ENCODE measurements at regions of chr3 and their contacts with region 1.

Region 1: DNA sequence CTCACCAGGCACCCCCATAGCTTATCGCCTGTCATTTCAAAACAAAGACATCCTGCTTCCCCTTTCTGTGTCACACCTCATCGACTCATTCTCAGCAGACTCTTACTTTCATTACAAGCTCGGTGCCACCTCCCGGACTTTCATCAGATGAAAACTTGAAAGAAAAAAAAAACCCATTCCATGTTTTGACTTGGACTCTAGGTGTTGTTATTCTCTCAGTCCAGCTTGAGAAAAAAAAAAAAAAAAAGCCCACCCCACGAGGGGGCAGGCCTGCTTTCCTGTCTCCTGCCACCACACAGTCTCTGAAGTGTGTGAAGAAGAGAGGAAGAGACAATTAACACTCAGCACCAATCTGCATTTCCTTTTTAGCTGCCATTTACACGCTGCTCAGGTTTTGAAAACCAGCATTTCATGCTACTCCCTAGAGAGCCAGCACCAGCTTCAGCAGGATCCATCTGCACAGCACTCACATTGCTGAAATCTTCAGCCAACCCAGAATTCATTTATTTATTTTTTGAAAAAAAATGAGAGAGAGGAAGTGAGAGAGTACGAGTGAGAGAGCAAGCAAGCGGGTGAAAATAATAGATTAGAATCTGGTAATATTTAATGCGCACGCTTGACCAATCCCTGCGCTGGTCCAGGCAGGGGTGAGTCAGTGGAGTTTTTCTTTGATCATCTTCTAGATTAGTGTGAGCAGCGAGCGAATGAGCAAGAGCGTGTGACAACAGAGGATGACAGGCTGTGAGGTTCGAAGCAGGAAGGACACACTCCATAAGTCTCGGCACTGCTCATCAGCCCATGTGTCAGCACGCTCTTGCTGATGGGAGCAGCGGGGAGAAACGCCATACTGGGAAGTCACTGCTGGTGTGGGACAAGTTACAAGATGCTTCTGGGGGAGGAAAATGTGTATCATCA is 23.5 kb downstream of the ZNF80 start:
- DNase-seq: peak; percentile 86
- ATAC-seq: peak; percentile 76
- H3K4me3 Mint-ChIP-seq: no peak overlapping the region
- H3K27ac Mint-ChIP-seq: no peak overlapping the region
- H3K4me1 Mint-ChIP-seq: peaks cover 17% of the 10 kb centered on the region
- H3K27me3 Mint-ChIP-seq: no peaks in the 10 kb centered on the region

Region 2: DNA sequence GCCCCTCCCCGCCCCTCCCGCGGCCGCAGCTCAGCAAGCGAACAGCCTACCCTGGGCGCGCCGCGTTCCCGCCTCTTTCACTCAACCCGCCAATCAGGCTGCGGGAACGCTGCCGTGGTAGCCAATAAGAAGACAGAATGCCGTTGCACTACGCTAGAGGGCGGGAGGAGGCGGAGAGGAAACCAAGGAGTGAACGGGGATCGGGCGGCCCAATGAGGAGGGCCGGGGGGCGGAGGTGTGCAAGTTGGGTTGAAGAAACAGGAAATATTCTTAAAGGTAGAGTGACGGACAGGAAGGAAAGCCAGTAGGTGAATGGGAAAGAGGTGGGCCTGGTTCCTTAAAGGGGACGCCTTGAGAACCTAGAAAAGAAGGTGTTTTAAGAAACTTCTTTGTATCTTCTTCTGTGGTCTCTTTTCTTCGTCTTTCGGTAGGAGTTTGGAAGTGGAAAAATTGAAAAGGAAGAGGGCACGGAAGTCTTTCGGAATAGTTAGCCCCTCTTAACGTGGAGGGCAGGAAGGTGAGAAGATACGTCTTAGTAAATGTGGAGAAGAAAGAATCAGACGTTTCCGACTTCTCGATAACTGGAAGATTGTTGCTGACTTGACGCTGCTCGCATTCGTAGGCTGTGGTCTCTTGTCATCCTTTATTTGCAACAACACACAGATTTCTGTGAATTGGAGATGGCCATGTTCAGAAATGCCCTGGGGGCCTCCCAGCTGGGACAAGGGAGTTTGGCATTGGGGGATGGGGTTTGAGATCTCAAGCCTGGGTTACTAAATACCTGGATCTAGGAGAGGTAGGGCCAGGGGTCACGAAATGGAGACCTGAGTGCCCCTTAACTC is 517.0 kb before region 1 on chr3:
- CTCF ChIA-PET with region 1: no interaction called
- POLR2A ChIA-PET with region 1: no interaction called
- intact Hi-C with region 1: loop called in 1 of 2 experiments (anchors 2 kb)
- DNase-seq: peak; percentile 99
- ATAC-seq: peak; percentile 92
- H3K4me3 Mint-ChIP-seq: no peak overlapping the region
- H3K27ac Mint-ChIP-seq: no peak overlapping the region
- H3K4me1 Mint-ChIP-seq: peaks cover 27% of the 10 kb centered on the region
- H3K27me3 Mint-ChIP-seq: no peaks in the 10 kb centered on the region

Region 3: GRCh38 chr3:113825090-113825489 is 388.8 kb before region 1 on chr3:
- CTCF ChIA-PET with region 1: no interaction called
- POLR2A ChIA-PET with region 1: no interaction called
- intact Hi-C with region 1: no loop called
- DNase-seq: no peak
- ATAC-seq: peak; percentile 47
- H3K4me3 Mint-ChIP-seq: no peak overlapping the region
- H3K27ac Mint-ChIP-seq: no peak overlapping the region
- H3K4me1 Mint-ChIP-seq: peaks cover 6% of the 10 kb centered on the region
- H3K27me3 Mint-ChIP-seq: no peaks in the 10 kb centered on the region

Region 4: DNA sequence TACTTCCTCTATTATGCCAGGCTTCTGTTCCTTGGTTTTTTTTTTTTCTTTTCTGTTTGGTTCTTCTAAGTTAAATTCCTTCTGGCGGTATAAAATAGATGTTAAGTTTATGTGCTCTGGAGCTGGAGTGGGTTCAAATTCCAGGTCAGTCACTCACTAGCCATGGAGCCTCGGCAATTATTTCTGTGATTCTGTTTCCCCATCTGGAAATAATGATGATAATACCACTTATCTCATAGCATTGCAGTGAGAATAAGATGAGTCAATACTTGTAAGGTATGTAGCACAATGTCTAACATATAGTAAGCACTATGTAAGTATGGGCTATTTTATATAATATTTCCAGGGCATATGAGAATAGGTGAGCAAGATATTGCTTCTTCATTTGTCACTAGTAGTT is 299.2 kb before region 1 on chr3:
- CTCF ChIA-PET with region 1: no interaction called
- POLR2A ChIA-PET with region 1: no interaction called
- intact Hi-C with region 1: no loop called
- DNase-seq: no peak
- ATAC-seq: no peak
- H3K4me3 Mint-ChIP-seq: no peak overlapping the region
- H3K27ac Mint-ChIP-seq: no peak overlapping the region
- H3K4me1 Mint-ChIP-seq: peaks cover 5% of the 10 kb centered on the region
- H3K27me3 Mint-ChIP-seq: no peaks in the 10 kb centered on the region

Region 5: DNA sequence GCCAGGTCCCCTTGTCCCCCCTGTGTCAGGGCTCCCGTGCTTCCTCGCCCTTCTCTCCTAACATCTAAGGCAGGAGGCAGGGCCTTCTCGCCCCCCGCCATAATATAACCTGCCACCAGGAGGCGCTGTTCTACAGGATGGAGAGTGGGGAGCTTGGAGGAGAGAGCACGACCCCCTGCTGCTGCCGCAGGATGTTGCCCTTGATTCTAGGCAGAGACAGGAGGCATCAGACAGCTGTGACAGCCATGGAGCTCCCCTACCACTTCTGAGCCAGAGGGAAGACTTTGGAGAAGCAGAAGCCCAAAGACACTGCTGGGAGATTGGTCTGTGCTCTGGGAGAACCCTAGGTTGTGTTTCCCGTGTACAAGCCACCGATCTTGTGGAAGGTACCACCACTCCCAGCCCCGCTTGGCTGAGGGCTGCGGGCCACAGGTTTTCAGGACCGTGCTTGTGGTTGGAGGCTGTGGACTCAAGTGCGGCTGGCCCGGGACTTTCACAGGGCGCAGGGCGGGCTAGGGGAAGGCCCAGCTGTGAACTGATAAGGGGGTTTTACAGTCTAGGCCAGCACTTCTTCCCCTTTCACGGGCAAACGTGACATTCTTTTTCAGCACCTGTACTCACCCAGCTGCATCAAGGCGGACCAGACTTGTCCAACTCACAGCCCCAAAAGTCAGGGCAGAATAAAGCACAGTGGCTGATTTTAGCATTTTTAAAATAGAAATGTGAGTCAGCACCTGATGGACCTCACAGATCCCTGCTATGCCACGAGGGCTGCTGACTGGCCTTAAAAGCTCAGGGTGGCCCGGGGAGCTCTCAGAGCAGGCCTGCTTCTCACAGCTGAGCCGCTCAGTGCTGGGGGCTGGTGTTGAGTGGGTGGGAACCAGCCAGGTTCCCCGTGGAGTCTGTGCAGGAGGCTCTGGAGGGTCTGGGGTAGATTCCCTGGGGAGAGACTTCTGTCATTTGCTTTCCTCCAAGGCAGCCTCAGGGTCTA is 77.3 kb after region 1 on chr3:
- CTCF ChIA-PET with region 1: interaction called, 14 read pairs
- POLR2A ChIA-PET with region 1: interaction called, 5 read pairs
- intact Hi-C with region 1: loop called (anchors 1 to 5 kb)
- DNase-seq: peak; percentile 94
- ATAC-seq: peak; percentile 76
- H3K4me3 Mint-ChIP-seq: peak overlapping the region; percentile 51
- H3K27ac Mint-ChIP-seq: peak overlapping the region; percentile 91
- H3K4me1 Mint-ChIP-seq: peaks cover 34% of the 10 kb centered on the region
- H3K27me3 Mint-ChIP-seq: no peaks in the 10 kb centered on the region

Region 6: GRCh38 chr3:114329823-114330222 is 115.9 kb after region 1 on chr3:
- CTCF ChIA-PET with region 1: interaction called, 3 read pairs
- POLR2A ChIA-PET with region 1: interaction called, 3 read pairs
- intact Hi-C with region 1: loop called (anchors 2 kb)
- DNase-seq: no peak
- ATAC-seq: peak; percentile 15
- H3K4me3 Mint-ChIP-seq: no peak overlapping the region
- H3K27ac Mint-ChIP-seq: peak overlapping the region; percentile 66
- H3K4me1 Mint-ChIP-seq: peaks cover 79% of the 10 kb centered on the region
- H3K27me3 Mint-ChIP-seq: no peaks in the 10 kb centered on the region

Region 7: DNA sequence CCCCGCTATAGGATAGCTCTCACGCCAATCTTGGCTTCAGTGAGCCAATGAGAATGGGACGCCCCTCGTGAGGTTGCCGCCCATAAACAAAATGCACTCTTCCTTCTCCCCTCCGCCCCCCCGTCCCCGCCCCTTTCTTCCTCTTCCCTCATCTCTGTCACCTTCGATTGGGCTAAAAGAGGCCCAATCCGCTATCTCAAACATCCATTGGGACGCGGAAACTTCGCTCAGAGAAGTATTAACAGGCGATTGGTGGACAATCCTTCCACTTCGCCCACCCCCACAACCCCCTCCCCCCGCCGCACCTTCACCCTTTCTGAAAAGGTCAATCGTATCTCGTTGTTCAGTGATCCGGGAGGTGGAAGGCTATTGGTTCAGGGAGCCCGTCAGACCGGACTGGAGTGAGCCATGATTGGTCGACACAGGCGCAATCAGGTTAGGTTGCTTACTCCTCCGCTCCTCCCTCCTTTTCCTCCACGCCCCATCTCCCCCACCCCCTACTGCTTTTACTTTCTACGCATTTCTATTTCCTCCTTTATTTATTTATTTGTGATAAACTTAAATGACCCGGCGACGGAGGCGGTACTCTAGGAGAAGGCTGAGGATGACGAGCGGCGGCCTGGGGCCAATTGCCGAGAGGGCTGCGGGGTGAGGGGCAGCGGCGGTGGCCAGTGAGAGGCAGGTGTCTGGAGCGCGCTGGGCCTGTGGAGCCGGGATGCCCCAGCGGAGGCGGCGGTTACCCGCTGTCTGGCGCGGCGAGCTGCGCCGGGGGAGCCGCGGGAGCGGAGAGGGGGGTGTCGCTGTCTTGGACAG is 933.7 kb after region 1 on chr3:
- CTCF ChIA-PET with region 1: no interaction called
- POLR2A ChIA-PET with region 1: interaction called, 3 read pairs
- intact Hi-C with region 1: loop called (anchors 1 to 10 kb)
- DNase-seq: peak; percentile 97
- ATAC-seq: peak; percentile 85
- H3K4me3 Mint-ChIP-seq: peak overlapping the region; percentile 97
- H3K27ac Mint-ChIP-seq: peak overlapping the region; percentile 98
- H3K4me1 Mint-ChIP-seq: peaks cover 21% of the 10 kb centered on the region
- H3K27me3 Mint-ChIP-seq: no peaks in the 10 kb centered on the region